ENCODE measurements at regions of chr13 and their contacts with region 1.

Region 1: GRCh38 chr13:92716749-92717148 is 509.9 kb upstream of the GPC6 start:
- DNase-seq: no peak
- H3K4me3 ChIP-seq: no peak overlapping the region
- H3K27ac ChIP-seq: no peak overlapping the region
- H3K27me3 ChIP-seq: no peaks in the 10 kb centered on the region
- CTCF ChIP-seq: peak; percentile 55

Region 2: GRCh38 chr13:92500192-92500591 is 216.6 kb before region 1 on chr13:
- CTCF ChIA-PET with region 1: no interaction called
- POLR2A ChIA-PET with region 1: no interaction called
- DNase-seq: no peak
- H3K4me3 ChIP-seq: no peak overlapping the region
- H3K27ac ChIP-seq: no peak overlapping the region
- H3K27me3 ChIP-seq: no peaks in the 10 kb centered on the region
- CTCF ChIP-seq: no peak

Region 3: DNA sequence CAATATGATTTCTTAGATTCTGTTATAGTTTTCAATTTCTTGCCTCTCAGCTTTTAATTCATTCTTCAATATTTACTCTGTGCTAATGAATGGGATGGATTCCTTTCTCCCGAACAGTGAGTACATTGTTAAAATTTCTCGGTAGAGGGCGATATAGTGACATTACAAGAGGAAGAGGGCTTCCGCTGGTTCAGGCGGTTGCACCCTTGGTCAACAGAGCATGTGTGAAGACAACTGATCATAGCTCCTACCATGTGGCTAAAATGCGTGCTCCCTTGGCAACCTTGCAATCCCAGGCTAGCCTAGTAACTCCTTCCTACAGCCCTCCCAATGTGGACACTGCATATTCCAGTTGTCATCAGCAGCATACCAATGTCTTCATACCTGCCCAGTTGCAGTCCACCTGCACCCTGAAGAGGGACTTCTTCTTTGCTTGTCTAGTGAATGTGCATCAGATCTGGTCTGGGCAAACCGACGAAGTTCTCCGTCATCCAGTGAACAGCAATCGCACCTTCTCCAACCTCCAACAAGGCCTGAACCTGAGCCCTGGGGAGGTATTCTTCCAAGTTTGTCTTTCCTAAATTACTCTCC is 143.2 kb before region 1 on chr13:
- CTCF ChIA-PET with region 1: no interaction called
- POLR2A ChIA-PET with region 1: no interaction called
- DNase-seq: no peak
- H3K4me3 ChIP-seq: no peak overlapping the region
- H3K27ac ChIP-seq: no peak overlapping the region
- H3K27me3 ChIP-seq: no peaks in the 10 kb centered on the region
- CTCF ChIP-seq: peak; percentile 13; the same call in 1 of the 2 replicates

Region 4: GRCh38 chr13:93377196-93377595 is 660.4 kb after region 1 on chr13:
- CTCF ChIA-PET with region 1: interaction called, 11 read pairs
- POLR2A ChIA-PET with region 1: no interaction called
- DNase-seq: no peak
- H3K4me3 ChIP-seq: no peak overlapping the region
- H3K27ac ChIP-seq: no peak overlapping the region
- H3K27me3 ChIP-seq: no peaks in the 10 kb centered on the region
- CTCF ChIP-seq: no peak